ENCODE measurements at regions of chr21 and their contacts with region 1.

Region 1: DNA sequence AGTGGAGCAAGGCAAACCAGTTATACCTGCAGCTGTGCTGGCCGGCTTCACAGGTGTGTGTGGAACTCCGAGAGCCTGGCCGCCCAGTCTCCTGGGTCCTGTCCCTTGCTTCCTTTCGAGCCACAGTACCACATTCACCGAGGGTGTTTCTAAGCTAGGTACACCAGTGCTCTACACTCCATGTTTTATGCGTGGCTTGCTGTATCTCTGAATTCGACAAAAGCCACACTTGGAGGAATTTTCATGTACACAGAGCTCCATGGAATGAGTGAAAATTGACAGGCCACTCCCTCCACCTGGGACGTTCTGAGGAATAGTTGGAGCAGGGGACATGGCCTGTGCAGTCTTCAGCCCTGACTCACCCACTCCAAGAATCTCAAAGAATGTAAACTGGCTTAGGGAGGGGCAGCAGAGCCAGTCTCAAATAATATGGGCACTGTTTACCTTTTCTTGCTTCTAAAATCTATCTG is 14.0 kb downstream of the ETS2 start:
- DNase-seq: no peak
- H3K4me3 ChIP-seq: no peak overlapping the region
- CTCF ChIP-seq: no peak

Region 2: GRCh38 chr21:38619992-38620479 is 199.7 kb before region 1 on chr21:
- in situ Hi-C with region 1: no loop called
- DNase-seq: peak; percentile 13
- H3K4me3 ChIP-seq: no peak overlapping the region
- CTCF ChIP-seq: no peak

Region 3: DNA sequence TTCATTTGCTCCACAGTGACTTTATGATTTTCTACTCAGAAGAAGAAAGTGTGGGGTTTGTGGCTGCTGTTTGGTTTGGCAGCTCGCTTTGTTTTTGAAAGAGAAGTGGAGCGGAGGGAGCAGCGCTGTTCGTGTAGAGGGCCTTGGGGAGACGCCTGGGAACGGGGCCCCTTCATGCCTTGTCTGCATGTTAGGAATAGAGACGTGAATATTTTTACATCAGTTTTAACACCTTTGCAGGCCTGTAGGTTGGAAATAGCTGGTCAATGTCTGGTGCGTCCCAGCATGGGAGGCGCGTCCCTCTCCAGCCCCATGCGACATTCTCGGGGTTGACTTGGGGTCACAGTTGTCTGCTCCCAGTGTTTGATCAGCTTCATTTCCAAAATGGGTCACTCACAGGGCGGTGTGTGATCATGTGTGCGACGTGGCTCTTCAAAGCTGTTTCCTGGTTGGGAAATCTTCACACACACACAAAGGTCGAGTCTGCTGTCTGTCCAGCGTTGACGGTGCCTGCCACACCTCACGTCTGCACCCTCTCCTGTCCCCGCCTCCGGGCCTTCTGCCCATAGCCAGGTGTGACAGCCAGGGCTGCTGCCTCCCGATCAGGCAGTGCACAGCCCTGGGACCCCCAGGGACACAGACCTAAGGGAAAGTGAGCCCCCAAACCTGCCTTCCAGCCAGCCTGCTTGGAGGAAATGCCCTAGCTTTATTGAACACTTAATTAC is 214.3 kb after region 1 on chr21:
- in situ Hi-C with region 1: loop called (anchors 10 kb)
- DNase-seq: no peak
- H3K4me3 ChIP-seq: no peak overlapping the region
- CTCF ChIP-seq: no peak

Region 4: GRCh38 chr21:39114871-39115575 is 295.3 kb after region 1 on chr21:
- in situ Hi-C with region 1: loop called (anchors 5 kb)
- DNase-seq: peak; percentile 69
- H3K4me3 ChIP-seq: no peak overlapping the region
- CTCF ChIP-seq: no peak